ENCODE measurements at regions of chr10 and their contacts with region 1.

Region 1: DNA sequence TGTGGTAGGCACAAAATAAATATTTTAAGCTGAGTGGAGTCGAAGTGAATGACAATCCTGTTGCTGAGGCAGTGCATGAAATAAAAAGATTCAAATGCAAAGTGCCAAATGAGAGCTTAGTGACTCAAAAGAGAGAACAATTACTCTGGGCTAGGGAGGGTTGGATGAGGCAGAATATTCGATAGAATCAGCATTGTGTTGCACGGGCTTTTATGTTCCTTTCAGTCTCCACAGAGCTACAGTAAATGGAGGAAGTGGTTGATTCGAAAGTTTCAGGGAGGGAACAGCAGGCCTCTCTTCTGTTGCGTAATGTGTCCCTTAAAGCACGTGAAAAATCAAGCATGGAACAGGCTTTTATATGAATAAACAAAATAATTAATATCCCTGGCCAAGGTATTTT is 599.3 kb upstream of the CELF2 start:
- DNase-seq: peak; percentile 22
- H3K4me3 Mint-ChIP-seq: peak overlapping the region; percentile 18
- H3K27ac Mint-ChIP-seq: peak overlapping the region; percentile 43
- H3K4me1 Mint-ChIP-seq: peaks cover 35% of the 10 kb centered on the region
- H3K27me3 Mint-ChIP-seq: peaks cover 3% of the 10 kb centered on the region

Region 2: GRCh38 chr10:10394933-10395656 is 23.3 kb before region 1 on chr10:
- intact Hi-C with region 1: no loop called
- DNase-seq: no peak
- H3K4me3 Mint-ChIP-seq: no peak overlapping the region
- H3K27ac Mint-ChIP-seq: no peak overlapping the region
- H3K4me1 Mint-ChIP-seq: no peaks in the 10 kb centered on the region
- H3K27me3 Mint-ChIP-seq: peaks cover 8% of the 10 kb centered on the region

Region 3: DNA sequence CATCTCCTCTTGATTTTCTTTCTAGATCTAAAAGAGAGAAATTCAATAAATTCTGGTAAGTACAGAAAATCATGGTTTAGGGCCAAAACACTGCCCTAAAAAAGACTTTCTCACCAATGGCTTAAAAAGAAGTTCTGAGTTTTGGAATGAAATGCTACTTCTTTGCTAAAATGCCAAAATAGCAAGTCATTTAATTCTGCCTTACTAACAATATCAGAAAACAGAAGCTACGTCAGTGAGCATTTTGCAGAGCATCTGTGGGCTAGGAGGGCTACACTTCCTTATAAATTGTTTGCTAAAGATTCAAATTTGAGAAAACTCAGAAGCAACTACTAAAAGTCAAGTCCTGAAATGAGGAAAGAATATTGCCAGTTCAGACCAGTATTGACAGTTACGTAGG is 38.5 kb after region 1 on chr10:
- intact Hi-C with region 1: no loop called
- DNase-seq: no peak
- H3K4me3 Mint-ChIP-seq: no peak overlapping the region
- H3K27ac Mint-ChIP-seq: no peak overlapping the region
- H3K4me1 Mint-ChIP-seq: no peaks in the 10 kb centered on the region
- H3K27me3 Mint-ChIP-seq: no peaks in the 10 kb centered on the region

Region 4: DNA sequence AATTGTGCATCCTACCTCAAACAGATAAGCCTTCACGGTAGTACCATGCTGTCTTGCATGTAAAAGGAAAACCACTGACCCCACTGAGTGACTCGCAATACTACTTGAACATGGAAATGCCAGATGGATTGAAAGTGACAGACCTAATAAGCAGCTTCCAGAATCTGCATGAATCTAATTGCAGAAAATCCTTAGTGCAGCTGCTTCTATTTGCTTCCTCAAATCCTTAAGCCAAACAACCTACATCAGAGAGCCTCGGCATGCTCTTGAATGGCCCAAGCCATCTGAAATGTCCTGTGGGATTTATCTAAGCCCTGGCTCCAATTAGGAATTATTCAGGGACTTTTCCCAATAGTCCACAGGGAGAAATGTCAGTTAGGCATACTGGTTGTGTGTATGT is 89.8 kb after region 1 on chr10:
- intact Hi-C with region 1: loop called (anchors 5 kb)
- DNase-seq: no peak
- H3K4me3 Mint-ChIP-seq: no peak overlapping the region
- H3K27ac Mint-ChIP-seq: no peak overlapping the region
- H3K4me1 Mint-ChIP-seq: peaks cover 13% of the 10 kb centered on the region
- H3K27me3 Mint-ChIP-seq: no peaks in the 10 kb centered on the region

Region 5: DNA sequence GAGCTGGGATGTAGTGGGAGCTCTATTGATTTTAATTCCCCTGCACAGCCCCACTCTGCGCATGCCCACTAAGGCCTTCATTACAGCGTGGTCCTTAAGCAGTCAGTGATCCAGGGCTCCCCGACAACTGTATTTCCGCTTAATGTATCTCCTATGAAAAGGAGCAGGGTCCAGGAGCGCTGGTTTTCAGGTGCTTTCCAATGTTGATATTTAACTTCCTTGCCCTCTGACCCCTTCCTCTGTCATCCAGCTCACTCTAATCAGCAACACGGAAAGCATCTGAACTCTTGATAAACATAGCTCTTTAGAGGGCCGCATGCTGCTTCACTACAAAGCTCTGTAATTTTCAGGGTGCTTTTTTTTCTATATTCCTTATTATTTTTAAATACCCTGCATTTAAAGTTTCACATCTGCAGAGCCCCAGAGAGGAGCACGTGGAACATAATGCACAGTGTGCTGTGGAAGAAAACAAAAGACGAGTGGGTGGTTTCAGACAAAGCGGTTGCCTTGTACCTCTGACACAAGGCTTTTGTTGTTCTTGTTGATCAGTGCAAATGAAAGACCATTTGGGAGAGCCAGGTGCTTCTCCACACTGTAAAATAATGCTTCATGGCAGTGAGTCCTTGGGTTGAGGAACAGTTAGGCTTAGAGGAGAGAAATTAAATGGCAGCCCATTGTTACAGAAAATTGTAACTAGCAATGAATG is 133.4 kb after region 1 on chr10:
- intact Hi-C with region 1: no loop called
- DNase-seq: no peak
- H3K4me3 Mint-ChIP-seq: no peak overlapping the region
- H3K27ac Mint-ChIP-seq: no peak overlapping the region
- H3K4me1 Mint-ChIP-seq: no peaks in the 10 kb centered on the region
- H3K27me3 Mint-ChIP-seq: no peaks in the 10 kb centered on the region

Measured in activated T-helper 2 cell treated with anti-CD3 and anti-CD28 coated beads, Interferon-gamma antibody, Interleukin-2, Interleukin-4, amounts not matched to agents 10 μg/mL and 5 μg/mL and 100 μg/mL, durations not matched to agents 14 hours and 24 hours and 36 hours (primary cell).